ENCODE measurements at regions of chr13 and their contacts with region 1.

Region 1: GRCh38 chr13:106536244-106537034 is 977 bp upstream of the EFNB2 start:
- DNase-seq: peak; percentile 38
- ATAC-seq: peak; percentile 66
- H3K4me3 ChIP-seq: peak overlapping the region; percentile 50 to 55
- H3K27ac ChIP-seq: no peak overlapping the region
- H3K4me1 ChIP-seq: no peaks in the 10 kb centered on the region; the same call in 1 of the 2 replicates
- H3K27me3 ChIP-seq: no peaks in the 10 kb centered on the region
- CTCF ChIP-seq: peak; percentile 85

Region 2: GRCh38 chr13:104571161-104571892 is 1965.1 kb before region 1 on chr13:
- CTCF ChIA-PET with region 1: interaction called, 3 read pairs
- POLR2A ChIA-PET with region 1: no interaction called
- in situ Hi-C with region 1: no loop called
- intact Hi-C with region 1: loop called (anchors 10 kb)
- DNase-seq: peak; percentile 42
- ATAC-seq: peak; percentile 90
- H3K4me3 ChIP-seq: peak overlapping the region in 1 of 2 experiments; percentile 24; a peak in 2 of 4 replicates
- H3K27ac ChIP-seq: no peak overlapping the region
- H3K4me1 ChIP-seq: no peaks in the 10 kb centered on the region
- H3K27me3 ChIP-seq: no peaks in the 10 kb centered on the region
- CTCF ChIP-seq: peak; percentile 75

Region 3: GRCh38 chr13:105410602-105411001 is 1125.8 kb before region 1 on chr13:
- CTCF ChIA-PET with region 1: no interaction called
- POLR2A ChIA-PET with region 1: no interaction called
- in situ Hi-C with region 1: no loop called
- intact Hi-C with region 1: loop called (anchors 10 kb)
- DNase-seq: no peak
- ATAC-seq: no peak
- H3K4me3 ChIP-seq: no peak overlapping the region
- H3K27ac ChIP-seq: no peak overlapping the region
- H3K4me1 ChIP-seq: no peaks in the 10 kb centered on the region
- H3K27me3 ChIP-seq: no peaks in the 10 kb centered on the region
- CTCF ChIP-seq: peak; percentile 65

Region 4: GRCh38 chr13:106382534-106382933 is 153.9 kb before region 1 on chr13:
- CTCF ChIA-PET with region 1: no interaction called
- POLR2A ChIA-PET with region 1: no interaction called
- in situ Hi-C with region 1: no loop called
- intact Hi-C with region 1: no loop called
- DNase-seq: no peak
- ATAC-seq: no peak
- H3K4me3 ChIP-seq: no peak overlapping the region
- H3K27ac ChIP-seq: no peak overlapping the region
- H3K4me1 ChIP-seq: no peaks in the 10 kb centered on the region
- H3K27me3 ChIP-seq: no peaks in the 10 kb centered on the region
- CTCF ChIP-seq: no peak

Region 5: DNA sequence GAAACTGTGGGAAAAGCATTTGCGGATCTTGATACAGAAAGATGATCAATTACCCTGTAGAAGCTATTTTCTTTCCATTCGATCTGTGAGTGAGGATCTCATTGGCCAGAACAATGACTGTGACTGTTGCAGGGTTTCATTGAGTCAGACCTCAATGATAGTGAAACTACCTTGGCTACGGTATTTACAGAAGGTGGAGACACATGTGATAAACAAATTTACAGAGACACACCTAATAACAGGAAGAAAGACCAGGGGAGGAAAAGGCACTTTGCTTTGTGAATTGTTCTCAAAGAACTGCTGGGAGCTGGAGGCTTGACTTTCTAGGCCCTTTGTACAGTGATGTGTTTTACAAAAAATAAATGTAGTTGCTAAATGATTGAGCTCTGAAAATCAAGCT is 51.3 kb after region 1 on chr13:
- CTCF ChIA-PET with region 1: no interaction called
- POLR2A ChIA-PET with region 1: no interaction called
- in situ Hi-C with region 1: no loop called
- intact Hi-C with region 1: no loop called
- DNase-seq: no peak
- ATAC-seq: no peak
- H3K4me3 ChIP-seq: no peak overlapping the region
- H3K27ac ChIP-seq: no peak overlapping the region
- H3K4me1 ChIP-seq: no peaks in the 10 kb centered on the region
- H3K27me3 ChIP-seq: no peaks in the 10 kb centered on the region
- CTCF ChIP-seq: no peak

Measured in Panc1 (cell line).